G401 (cell line): ENCODE measurements at regions of chr1 and their contacts with region 1.

Region 1: GRCh38 chr1:1124786-1125661 is 9.1 kb upstream of the C1orf159 start:
- DNase-seq: no peak

Region 2: GRCh38 chr1:832136-832535 is 292.9 kb before region 1 on chr1:
- in situ Hi-C with region 1: no loop called
- DNase-seq: no peak

Region 3: GRCh38 chr1:958823-959729 is 165.9 kb before region 1 on chr1 and contains the start of gene NOC2L:
- in situ Hi-C with region 1: no loop called
- DNase-seq: peak; percentile 90
- total RNA-seq, gene NOC2L: 193 and 221 TPM in 2 replicates

Region 4: GRCh38 chr1:1173793-1174415 is 48.9 kb after region 1 on chr1 and contains the start of gene TTLL10:
- in situ Hi-C with region 1: loop called (anchors 5 kb)
- DNase-seq: no peak
- total RNA-seq, gene TTLL10: not detected in 2 replicates

Region 5: GRCh38 chr1:1304331-1305299 is 179.6 kb after region 1 on chr1:
- in situ Hi-C with region 1: no loop called
- DNase-seq: peak; percentile 94